ENCODE measurements at regions of chr14 and their contacts with region 1.

Region 1: DNA sequence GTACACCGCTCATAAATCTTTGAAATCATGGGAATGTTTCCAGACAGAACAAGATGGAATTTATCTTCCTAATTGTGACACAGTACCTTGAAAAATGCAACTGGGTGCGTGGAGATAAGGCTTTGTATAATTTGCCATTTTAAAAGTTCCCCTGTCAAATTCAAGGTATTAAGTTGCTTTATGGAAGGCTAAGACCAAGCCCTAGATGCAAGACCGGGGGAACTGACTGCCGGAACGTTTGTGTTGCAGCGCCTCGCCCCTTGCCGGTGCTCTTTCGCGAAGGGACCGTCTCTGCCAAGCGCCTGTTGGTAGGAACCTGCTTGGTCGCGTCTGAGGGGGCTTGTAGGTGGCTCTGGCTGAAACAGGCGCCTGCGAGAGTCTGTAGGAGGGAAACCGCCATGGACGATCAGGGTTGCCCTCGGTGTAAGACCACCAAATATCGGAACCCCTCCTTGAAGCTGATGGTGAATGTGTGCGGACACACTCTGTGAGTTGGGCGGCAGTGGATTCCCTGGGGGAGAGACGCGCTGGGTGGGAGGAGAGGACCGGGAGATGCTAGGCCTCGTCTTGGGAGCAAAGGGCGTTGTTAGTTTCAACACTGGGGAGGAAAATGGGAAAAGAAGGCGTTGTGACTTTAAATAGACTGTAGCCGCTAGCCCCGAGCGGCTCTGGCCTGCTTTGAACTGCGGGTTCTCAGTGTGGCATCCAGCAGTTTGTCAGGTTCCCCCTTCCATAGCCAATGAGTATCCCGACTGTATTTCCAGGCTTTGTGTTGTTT is at the start of gene MNAT1:
- DNase-seq: peak; percentile 68 to 74 (median 72)
- H3K4me3 ChIP-seq: peak within 1 kb of the TSS; percentile 92 to 97
- H3K4me3 Mint-ChIP-seq: peak within 1 kb of the TSS; percentile 95 to 100 (median 98)
- H3K27ac ChIP-seq: peak within 1 kb of the TSS; percentile 39
- H3K27ac Mint-ChIP-seq: peak within 1 kb of the TSS; percentile 24 to 98 (median 95)
- H3K4me1 ChIP-seq: peaks cover 20% of the 10 kb centered on the region
- H3K4me1 Mint-ChIP-seq: peaks cover 23 to 38% (median 28%) of the 10 kb centered on the region in 4 donors
- H3K27me3 ChIP-seq: no peaks in the 10 kb centered on the region
- H3K27me3 Mint-ChIP-seq: peaks cover 7 to 15% of the 10 kb centered on the region in 2 donors
- total RNA-seq, gene MNAT1: 12.6 to 13.0 TPM

Region 2: GRCh38 chr14:60724137-60724619 is 10.5 kb before region 1 on chr14 and contains the start of gene SIX4:
- CTCF ChIA-PET with region 1: interaction called, 7 read pairs
- POLR2A ChIA-PET with region 1: interaction called, 6 read pairs
- intact Hi-C with region 1: loop called (anchors 1 kb)
- DNase-seq: no peak
- H3K4me3 ChIP-seq: peak within 1 kb of the TSS; percentile 47 to 61
- H3K4me3 Mint-ChIP-seq: peak within 1 kb of the TSS; percentile 85 to 93 (median 88)
- H3K27ac ChIP-seq: no peak within 1 kb of the TSS
- H3K27ac Mint-ChIP-seq: peak within 1 kb of the TSS in 2 of 7 donors; percentile 4 to 65
- H3K4me1 ChIP-seq: peaks cover 20% of the 10 kb centered on the region
- H3K4me1 Mint-ChIP-seq: peaks cover 7 to 36% (median 15%) of the 10 kb centered on the region in 4 donors
- H3K27me3 ChIP-seq: peaks cover 42% of the 10 kb centered on the region
- H3K27me3 Mint-ChIP-seq: peaks cover 57 to 66% of the 10 kb centered on the region in 2 donors
- total RNA-seq, gene SIX4: not detected

Region 3: GRCh38 chr14:60753264-60754119 is 18.8 kb after region 1 on chr14:
- CTCF ChIA-PET with region 1: interaction called, 3 read pairs
- POLR2A ChIA-PET with region 1: interaction called, 3 read pairs
- intact Hi-C with region 1: loop called (anchors 2 kb)
- DNase-seq: peak; percentile 75 to 83 (median 79)
- H3K4me3 ChIP-seq: no peak overlapping the region
- H3K4me3 Mint-ChIP-seq: peak overlapping the region in 6 of 8 donors; percentile 40 to 69 (median 60)
- H3K27ac ChIP-seq: no peak overlapping the region
- H3K27ac Mint-ChIP-seq: peak overlapping the region; percentile 69 to 88 (median 83)
- H3K4me1 ChIP-seq: peaks cover 29% of the 10 kb centered on the region
- H3K4me1 Mint-ChIP-seq: peaks cover 20 to 27% (median 24%) of the 10 kb centered on the region in 4 donors
- H3K27me3 ChIP-seq: no peaks in the 10 kb centered on the region
- H3K27me3 Mint-ChIP-seq: peaks cover 0 to 1% of the 10 kb centered on the region in 2 donors

Region 4: DNA sequence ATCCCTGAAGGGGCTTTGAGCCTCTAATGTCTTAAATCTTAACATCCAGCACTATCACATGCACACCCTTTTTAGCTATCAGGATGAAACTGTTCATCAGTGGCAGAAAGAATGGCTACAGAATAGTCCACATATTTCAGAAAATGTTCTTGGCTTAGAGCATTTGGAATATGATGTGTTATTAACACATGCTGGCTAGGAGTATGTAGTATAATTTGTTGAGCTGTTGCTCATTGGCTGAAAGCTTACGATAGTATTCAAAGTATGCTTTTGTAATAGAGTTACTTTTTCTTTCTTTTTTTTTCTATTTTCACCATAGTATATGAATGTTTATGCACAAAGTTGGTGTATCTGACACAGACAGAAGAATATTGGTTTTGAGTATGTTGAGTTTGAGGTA is 55.0 kb after region 1 on chr14:
- CTCF ChIA-PET with region 1: no interaction called
- POLR2A ChIA-PET with region 1: no interaction called
- intact Hi-C with region 1: no loop called
- DNase-seq: no peak
- H3K4me3 ChIP-seq: no peak overlapping the region
- H3K4me3 Mint-ChIP-seq: no peak overlapping the region
- H3K27ac ChIP-seq: no peak overlapping the region
- H3K27ac Mint-ChIP-seq: no peak overlapping the region
- H3K4me1 ChIP-seq: no peaks in the 10 kb centered on the region
- H3K4me1 Mint-ChIP-seq: peaks cover 0 to 5% (median 1%) of the 10 kb centered on the region in 4 donors
- H3K27me3 ChIP-seq: no peaks in the 10 kb centered on the region
- H3K27me3 Mint-ChIP-seq: no peaks in the 10 kb centered on the region

Region 5: DNA sequence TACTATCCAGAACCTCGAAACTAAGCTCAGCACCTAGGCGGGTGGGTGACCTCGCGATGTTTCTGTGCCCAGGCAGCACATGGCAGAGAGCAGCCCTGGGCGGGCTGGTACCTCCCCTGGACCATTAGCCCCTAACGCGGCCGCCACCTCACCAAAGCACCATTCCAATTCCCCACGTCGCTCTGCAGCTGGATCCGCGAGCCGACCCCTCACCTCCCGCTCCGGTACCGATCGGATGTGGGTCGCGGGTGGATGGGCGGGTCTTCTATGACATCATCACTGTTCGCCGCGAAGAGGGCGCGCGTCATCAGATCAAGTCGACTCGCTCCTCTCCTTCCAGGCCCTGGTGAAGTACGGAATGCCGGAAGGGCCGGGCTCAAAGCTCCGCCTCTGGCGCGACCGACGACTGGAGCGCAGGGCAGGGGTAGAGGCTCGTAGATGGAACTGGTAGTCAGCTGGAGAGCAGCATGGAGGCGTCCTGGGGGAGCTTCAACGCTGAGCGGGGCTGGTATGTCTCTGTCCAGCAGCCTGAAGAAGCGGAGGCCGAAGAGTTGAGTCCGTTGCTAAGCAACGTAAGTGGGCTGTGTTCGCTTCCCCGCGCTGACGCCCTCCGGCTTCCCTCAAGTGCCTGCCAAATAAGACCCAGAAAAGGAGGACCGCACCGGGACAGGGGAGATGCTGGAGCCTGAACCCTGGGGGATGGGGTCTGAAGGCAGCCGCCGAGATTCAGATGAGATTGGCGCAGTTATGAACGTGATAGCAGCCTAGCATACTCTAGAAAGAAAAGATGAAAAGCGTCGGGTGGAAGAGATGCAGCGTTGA is 246.4 kb after region 1 on chr14 and contains the starts of genes SLC38A6 and TRMT5:
- CTCF ChIA-PET with region 1: no interaction called
- POLR2A ChIA-PET with region 1: interaction called, 3 read pairs
- intact Hi-C with region 1: loop called (anchors 1 kb)
- DNase-seq: peak; percentile 92 to 94 (median 93)
- H3K4me3 ChIP-seq: peak within 1 kb of the TSS; percentile 78 to 96
- H3K4me3 Mint-ChIP-seq: no peak within 1 kb of the TSS
- H3K27ac ChIP-seq: peak within 1 kb of the TSS; percentile 84
- H3K27ac Mint-ChIP-seq: no peak within 1 kb of the TSS
- H3K4me1 ChIP-seq: peaks cover 32% of the 10 kb centered on the region
- H3K4me1 Mint-ChIP-seq: peaks cover 16 to 22% (median 17%) of the 10 kb centered on the region in 4 donors
- H3K27me3 ChIP-seq: no peaks in the 10 kb centered on the region
- H3K27me3 Mint-ChIP-seq: no peaks in the 10 kb centered on the region
- total RNA-seq, gene SLC38A6: 19.9 to 21.3 TPM
- total RNA-seq, gene TRMT5: 8.5 to 11.8 TPM